ENCODE measurements at regions of chr9 and their contacts with region 1.

Region 1: DNA sequence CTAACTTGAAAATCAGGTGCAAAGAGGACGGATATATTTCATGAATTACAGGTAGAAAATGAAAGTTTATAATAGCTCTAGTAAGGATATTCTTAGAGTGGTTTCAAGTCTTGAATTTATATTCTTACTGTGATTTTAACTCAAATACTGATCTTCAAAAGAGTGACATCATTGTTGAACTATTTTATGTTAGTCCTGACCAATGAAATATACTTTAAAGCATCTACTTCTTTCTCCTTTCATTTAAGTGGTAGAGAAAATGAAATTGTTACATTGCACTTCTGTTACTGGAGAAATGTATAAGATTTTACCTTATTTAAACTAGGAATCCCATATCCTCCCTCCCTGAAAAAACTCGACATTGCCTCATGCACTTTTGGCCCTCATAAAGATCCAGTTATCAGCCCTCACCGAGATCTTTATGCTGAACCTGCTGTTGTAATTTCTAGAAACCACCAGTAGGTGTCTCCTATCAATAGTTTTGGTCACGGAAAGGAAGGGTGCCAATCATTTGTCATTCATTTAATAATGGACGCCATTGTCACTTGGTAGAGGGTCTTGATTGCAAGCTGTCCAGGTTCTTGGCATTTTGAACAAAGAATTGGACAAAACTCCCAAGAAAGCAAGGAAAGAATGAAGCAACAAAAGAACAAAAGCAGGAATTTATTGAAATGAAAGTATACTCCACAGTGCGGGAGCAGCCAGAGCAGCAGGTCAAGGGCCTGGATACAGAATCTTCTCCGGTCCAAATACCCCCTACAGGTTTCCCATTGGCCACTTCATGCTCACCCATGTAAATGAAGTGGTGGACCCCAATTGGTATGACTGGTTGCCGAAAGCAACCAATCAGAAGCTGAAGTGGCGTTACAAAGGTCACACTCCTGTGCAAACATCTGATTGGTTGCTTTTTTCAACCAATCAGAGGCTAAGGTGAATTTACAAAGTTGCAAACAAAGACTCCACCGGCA is 524.2 kb downstream of the PSAT1 start:
- DNase-seq: no peak
- H3K4me3 ChIP-seq: peak overlapping the region in 2 of 3 donors; percentile 30 to 50
- H3K27ac ChIP-seq: no peak overlapping the region
- H3K4me1 ChIP-seq: no peaks in the 10 kb centered on the region
- H3K27me3 ChIP-seq: no peaks in the 10 kb centered on the region
- CTCF ChIP-seq: peak; percentile 29 to 48 (median 45)
- POLR2A ChIP-seq: no peak

Region 2: DNA sequence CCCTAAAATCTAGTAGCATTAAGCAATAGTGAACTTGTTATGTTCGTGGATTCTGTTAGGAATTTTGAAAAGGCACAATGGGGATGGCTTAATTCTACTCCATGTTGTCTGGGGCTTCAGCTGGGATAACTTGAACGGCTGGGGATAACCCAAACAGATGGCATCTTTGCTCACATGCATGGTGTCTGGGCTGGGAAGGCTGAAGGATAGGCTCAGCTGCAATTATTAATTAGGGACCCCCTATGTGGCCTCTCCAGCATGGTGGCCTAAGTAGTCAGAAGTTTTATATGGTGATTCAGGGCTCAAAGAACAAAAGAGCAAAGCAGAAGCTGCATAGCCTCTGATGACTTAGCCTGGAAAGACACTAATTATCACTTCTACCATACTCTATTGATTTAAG is 26.9 kb after region 1 on chr9:
- intact Hi-C with region 1: loop called (anchors 1 kb)
- DNase-seq: no peak
- H3K4me3 ChIP-seq: no peak overlapping the region
- H3K27ac ChIP-seq: no peak overlapping the region
- H3K4me1 ChIP-seq: no peaks in the 10 kb centered on the region
- H3K27me3 ChIP-seq: no peaks in the 10 kb centered on the region
- CTCF ChIP-seq: no peak
- POLR2A ChIP-seq: no peak